Right ventricle myocardium superior (tissue), 1 donor: ENCODE measurements at regions of chr3 and their contacts with region 1.

Region 1: GRCh38 chr3:128133273-128134084 is 9.9 kb upstream of the RUVBL1 start:
- DNase-seq: no peak
- ATAC-seq: peak; percentile 79

Region 2: GRCh38 chr3:128075516-128076482 is 57.7 kb before region 1 on chr3:
- intact Hi-C with region 1: loop called (anchors 10 kb)
- DNase-seq: peak; percentile 94
- ATAC-seq: peak; percentile 94

Region 3: GRCh38 chr3:128095222-128095703 is 38.2 kb before region 1 on chr3:
- intact Hi-C with region 1: loop called (anchors 5 kb)
- DNase-seq: peak; percentile 90
- ATAC-seq: peak; percentile 99

Region 4: GRCh38 chr3:128353991-128354687 is 220.7 kb after region 1 on chr3:
- intact Hi-C with region 1: no loop called
- DNase-seq: no peak
- ATAC-seq: no peak